HEK293T (cell line): ENCODE measurements at regions of chr19 and their contacts with region 1.

Region 1: GRCh38 chr19:45862564-45863334 is at the start of gene SYMPK:
- DNase-seq: peak; percentile 99

Region 2: DNA sequence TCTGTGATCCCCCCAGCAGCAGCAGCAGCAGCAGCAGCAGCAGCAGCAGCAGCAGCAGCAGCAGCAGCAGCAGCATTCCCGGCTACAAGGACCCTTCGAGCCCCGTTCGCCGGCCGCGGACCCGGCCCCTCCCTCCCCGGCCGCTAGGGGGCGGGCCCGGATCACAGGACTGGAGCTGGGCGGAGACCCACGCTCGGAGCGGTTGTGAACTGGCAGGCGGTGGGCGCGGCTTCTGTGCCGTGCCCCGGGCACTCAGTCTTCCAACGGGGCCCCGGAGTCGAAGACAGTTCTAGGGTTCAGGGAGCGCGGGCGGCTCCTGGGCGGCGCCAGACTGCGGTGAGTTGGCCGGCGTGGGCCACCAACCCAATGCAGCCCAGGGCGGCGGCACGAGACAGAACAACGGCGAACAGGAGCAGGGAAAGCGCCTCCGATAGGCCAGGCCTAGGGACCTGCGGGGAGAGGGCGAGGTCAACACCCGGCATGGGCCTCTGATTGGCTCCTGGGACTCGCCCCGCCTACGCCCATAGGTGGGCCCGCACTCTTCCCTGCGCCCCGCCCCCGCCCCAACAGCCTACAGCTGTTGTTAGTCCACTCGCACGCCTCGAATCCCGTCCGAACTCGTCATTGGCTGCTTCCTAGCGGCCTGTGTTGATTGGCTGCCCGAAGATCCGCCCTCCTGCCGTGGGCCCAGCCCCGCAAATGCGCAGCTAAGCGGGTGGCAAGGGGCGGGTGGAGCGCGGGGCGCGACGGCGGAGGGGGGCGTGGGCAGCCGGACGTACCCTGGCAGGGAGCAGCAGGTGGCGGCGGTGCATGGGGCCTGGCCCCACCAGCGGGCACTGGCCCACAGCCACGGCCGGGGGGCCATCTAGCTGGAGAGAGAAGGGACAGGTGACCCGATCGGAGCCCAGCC is 92.3 kb before region 1 on chr19:
- CTCF ChIA-PET with region 1: interaction called, 3 read pairs
- POLR2A ChIA-PET with region 1: interaction called, 14 read pairs
- DNase-seq: peak; percentile 91

Region 3: DNA sequence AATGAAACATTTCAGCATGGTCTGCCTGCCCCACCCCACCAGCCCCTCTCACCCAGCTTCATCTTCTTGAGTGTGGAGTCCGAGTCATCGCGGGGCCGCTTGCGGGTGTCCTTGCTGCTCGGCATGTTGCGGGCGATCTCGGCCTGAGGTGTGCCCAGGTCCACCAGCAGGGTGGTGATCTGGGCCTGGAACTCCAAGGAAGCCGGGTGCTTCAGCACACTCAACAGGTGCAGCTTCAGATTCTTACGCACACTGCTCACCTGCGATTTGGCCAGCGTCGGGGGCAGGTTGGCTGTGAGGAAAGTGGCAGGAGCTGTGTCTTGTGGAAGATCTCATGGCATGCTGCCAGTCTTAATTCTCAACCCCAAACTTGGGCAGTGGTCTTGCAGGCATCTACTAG is 20.6 kb before region 1 on chr19:
- CTCF ChIA-PET with region 1: no interaction called
- POLR2A ChIA-PET with region 1: no interaction called
- DNase-seq: no peak

Region 4: DNA sequence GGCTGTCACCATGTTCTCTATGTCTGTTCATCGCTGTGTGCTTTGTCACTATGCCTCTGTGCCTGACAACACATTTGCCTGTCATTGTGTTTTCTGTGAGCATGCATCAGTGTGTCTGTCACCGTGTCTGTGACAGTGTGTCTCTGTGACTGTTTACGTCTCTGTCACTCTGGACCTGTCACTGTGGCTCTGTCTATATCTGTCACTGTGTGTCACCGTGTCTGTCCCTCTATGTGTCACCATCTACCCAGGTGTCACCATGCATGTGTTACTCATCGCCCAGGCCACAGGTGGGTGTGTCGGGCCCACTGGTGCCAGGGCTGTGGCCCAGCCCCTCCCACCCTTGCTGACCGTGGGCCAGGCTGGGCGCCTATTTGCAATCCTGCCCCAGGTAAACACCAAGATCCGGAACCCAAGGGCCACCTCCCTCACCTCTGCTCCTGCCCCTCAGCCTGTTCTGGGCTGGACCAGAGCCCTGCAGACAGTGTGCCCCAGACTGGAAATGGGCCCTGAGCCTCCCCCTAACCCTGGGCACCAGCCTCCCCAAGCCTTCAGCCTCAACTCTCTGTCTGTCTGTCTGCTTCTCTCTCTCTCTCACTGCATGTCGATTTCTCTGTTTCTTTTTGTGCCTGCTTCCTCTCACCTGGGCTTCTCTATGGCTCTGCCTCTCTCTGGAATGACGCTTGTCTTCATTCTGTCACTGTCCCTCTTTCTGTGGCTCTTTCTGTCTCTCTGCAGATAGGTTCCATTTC is 15.5 kb after region 1 on chr19:
- CTCF ChIA-PET with region 1: interaction called, 7 read pairs
- POLR2A ChIA-PET with region 1: interaction called, 13 read pairs
- DNase-seq: no peak

Region 5: DNA sequence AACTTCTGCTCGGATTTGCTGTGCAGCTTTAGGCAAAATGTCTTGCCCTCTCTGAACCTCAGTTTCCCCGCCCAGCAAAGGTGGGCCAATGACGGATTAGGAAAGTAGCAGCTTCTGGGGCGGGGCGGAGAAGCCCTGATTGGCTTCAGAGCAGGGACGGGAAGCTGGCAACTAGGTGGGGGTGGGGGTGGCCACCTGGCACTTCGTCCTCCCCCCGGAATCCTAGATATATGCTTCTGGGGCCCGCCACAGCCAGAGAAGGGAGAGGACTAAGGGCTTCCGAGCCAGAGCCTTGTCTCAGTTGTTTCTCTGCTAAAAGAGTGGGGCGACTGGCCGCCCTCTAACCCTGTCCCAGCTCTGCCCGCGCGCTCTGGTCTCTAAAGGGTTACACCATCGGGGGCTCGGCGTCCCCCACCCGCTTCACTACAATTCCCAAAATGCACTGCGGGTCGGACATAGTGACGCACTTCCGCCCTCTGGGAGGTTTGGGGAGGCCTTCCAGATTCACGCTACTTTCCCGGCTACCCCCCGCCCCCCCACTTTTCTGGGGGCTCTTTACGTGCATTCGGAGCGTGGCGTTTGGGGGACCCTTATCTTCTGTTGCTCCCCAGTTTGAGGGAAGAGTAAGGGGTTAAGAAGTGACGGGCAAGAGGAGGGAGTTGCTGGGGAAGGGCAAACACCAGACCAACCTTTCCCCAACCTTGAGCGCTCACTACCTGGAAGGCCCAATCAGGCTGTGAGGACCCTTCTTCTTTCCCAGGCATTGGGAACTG is 23.9 kb after region 1 on chr19:
- CTCF ChIA-PET with region 1: interaction called, 7 read pairs
- POLR2A ChIA-PET with region 1: interaction called, 30 read pairs
- DNase-seq: peak; percentile 87

Region 6: GRCh38 chr19:45994989-45995714 is 132.4 kb after region 1 on chr19 and contains the start of gene CCDC61:
- CTCF ChIA-PET with region 1: no interaction called
- POLR2A ChIA-PET with region 1: interaction called, 11 read pairs
- DNase-seq: peak; percentile 98

Region 7: DNA sequence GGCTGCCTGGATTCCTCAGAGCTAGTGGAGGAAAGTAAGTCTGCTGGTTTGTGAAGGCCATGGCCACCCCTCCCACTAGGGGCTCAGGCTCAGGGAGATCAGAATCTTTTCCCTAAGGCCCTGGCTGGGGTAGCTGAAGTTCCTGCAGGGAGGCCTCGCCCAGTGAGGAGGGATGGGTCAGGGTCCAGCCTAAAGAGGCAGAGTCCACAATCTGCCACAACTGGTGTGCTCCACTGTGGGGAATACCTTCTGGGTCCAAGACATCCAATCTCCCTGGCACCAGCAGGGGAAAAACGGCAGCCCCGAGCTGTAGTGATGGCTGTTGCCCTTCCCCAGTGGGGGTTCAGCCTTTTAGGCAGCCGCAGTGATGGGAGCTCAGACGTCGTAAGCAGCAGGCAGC is 238.5 kb after region 1 on chr19:
- CTCF ChIA-PET with region 1: no interaction called
- POLR2A ChIA-PET with region 1: no interaction called
- DNase-seq: no peak